GM12878 (cell line): ENCODE measurements at regions of chr6 and their contacts with region 1.

Region 1: DNA sequence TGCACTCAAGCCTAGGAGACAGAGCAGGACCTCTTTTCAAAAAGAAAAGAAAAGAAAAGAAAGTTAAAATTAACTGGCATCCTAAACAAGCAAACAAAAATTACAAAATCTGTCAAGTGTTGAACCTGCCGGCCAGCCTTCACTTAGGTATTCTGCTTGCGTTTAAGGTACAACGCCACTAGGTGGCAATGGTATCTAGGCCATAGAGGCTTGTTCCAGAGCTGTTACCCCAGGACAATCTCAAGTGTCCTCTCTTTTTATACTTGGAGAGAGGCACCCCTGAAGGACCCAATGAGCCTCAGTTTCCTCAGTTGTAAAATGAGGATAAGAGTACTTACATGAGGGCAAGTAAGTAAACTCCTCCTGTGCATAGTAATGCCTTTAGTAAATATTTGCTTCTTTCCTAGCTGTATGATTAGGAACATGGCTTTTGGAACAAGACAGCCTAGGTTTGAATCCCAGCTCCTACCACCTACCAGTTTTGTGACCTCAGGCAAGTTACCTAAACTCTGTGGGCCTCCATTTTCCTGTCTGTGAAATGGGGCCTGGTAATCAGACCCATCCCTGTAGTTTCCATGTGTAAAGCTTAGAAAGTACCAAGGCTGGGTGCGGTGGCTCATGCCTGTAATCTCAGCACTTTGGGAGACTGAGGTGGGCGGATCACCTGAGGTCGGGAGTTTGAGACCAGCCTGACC is 5.8 kb upstream of the PACSIN1 start:
- DNase-seq: peak; percentile 24
- ATAC-seq: peak; percentile 87
- H3K4me3 ChIP-seq: no peak overlapping the region
- H3K27ac ChIP-seq: no peak overlapping the region
- H3K4me1 ChIP-seq: no peaks in the 10 kb centered on the region; the same call in 1 of the 2 replicates
- H3K27me3 ChIP-seq: no peaks in the 10 kb centered on the region
- CTCF ChIP-seq: peak; percentile 69 to 83 (median 77)
- EP300 ChIP-seq: no peak
- POLR2A ChIP-seq: no peak
- RAD21 ChIP-seq: peak; percentile 95

Region 2: GRCh38 chr6:34414999-34415858 is 44.8 kb before region 1 on chr6:
- CTCF ChIA-PET with region 1: interaction called, 12 read pairs
- POLR2A ChIA-PET with region 1: no interaction called
- RAD21 ChIA-PET with region 1: interaction called, 3 read pairs
- SMC1A ChIA-PET with region 1: interaction called, 3 read pairs
- in situ Hi-C with region 1: no loop called
- intact Hi-C with region 1: no loop called
- DNase-seq: no peak
- ATAC-seq: peak; percentile 85
- H3K4me3 ChIP-seq: no peak overlapping the region
- H3K27ac ChIP-seq: no peak overlapping the region
- H3K4me1 ChIP-seq: no peaks in the 10 kb centered on the region
- H3K27me3 ChIP-seq: no peaks in the 10 kb centered on the region
- CTCF ChIP-seq: peak; percentile 44 to 73 (median 65); a peak in 5 of 6 replicates
- EP300 ChIP-seq: no peak
- POLR2A ChIP-seq: no peak
- RAD21 ChIP-seq: peak; percentile 74

Region 3: DNA sequence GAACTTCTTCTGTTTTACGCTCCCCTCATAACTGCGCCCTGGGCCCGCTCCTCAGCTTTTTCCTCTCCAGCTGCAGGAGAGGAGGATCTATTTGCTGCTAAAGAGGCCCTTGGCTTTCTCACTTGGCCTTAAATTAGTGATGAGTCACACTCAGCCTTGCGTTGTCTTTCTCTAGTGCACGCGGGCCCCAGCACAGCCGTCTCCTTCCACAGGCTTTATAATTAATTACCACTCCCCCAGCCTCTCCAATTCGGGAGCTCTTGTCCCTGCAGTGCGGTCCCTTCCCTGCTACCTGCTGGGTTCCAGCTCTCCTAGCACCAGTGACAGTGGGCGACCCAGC is 31.0 kb after region 1 on chr6:
- CTCF ChIA-PET with region 1: interaction called, 10 read pairs
- POLR2A ChIA-PET with region 1: no interaction called
- RAD21 ChIA-PET with region 1: interaction called, 4 read pairs
- SMC1A ChIA-PET with region 1: interaction called, 5 read pairs
- in situ Hi-C with region 1: no loop called
- intact Hi-C with region 1: no loop called
- DNase-seq: no peak
- ATAC-seq: no peak
- H3K4me3 ChIP-seq: no peak overlapping the region
- H3K27ac ChIP-seq: no peak overlapping the region
- H3K4me1 ChIP-seq: no peaks in the 10 kb centered on the region
- H3K27me3 ChIP-seq: no peaks in the 10 kb centered on the region
- CTCF ChIP-seq: no peak
- EP300 ChIP-seq: no peak
- POLR2A ChIP-seq: no peak
- RAD21 ChIP-seq: no peak

Region 4: GRCh38 chr6:34602318-34603111 is 142.5 kb after region 1 on chr6:
- CTCF ChIA-PET with region 1: interaction called, 198 read pairs
- POLR2A ChIA-PET with region 1: no interaction called
- RAD21 ChIA-PET with region 1: interaction called, 99 read pairs
- SMC1A ChIA-PET with region 1: interaction called, 124 read pairs
- in situ Hi-C with region 1: loop called (anchors 5 kb)
- intact Hi-C with region 1: no loop called
- DNase-seq: no peak
- ATAC-seq: no peak
- H3K4me3 ChIP-seq: no peak overlapping the region
- H3K27ac ChIP-seq: no peak overlapping the region
- H3K4me1 ChIP-seq: no peaks in the 10 kb centered on the region
- H3K27me3 ChIP-seq: no peaks in the 10 kb centered on the region
- CTCF ChIP-seq: no peak
- EP300 ChIP-seq: no peak
- POLR2A ChIP-seq: no peak
- RAD21 ChIP-seq: no peak

Region 5: DNA sequence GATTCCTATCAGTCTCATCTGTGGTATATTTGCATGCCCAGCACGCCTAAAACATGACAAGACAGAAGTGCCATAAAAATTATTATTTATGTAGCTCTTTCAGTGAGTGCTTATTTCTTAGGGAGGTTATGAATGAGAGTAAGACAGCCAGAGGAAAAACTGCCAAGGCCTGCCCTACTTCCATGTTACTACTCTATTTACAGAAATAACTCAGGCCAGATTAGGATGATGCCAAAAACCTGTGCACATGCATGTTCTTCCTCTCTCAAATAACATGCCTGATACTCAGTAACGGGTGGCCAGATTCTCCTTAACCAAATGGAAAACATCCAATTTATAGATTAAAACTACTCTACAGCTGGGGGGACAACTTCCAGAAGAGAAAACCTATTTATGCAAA is 190.8 kb after region 1 on chr6:
- CTCF ChIA-PET with region 1: no interaction called
- POLR2A ChIA-PET with region 1: no interaction called
- RAD21 ChIA-PET with region 1: no interaction called
- SMC1A ChIA-PET with region 1: no interaction called
- in situ Hi-C with region 1: no loop called
- intact Hi-C with region 1: no loop called
- DNase-seq: no peak
- ATAC-seq: no peak
- H3K4me3 ChIP-seq: no peak overlapping the region
- H3K27ac ChIP-seq: peak overlapping the region; percentile 71
- H3K4me1 ChIP-seq: peaks cover 35% of the 10 kb centered on the region
- H3K27me3 ChIP-seq: no peaks in the 10 kb centered on the region
- CTCF ChIP-seq: no peak
- EP300 ChIP-seq: no peak
- POLR2A ChIP-seq: no peak
- RAD21 ChIP-seq: no peak

Region 6: DNA sequence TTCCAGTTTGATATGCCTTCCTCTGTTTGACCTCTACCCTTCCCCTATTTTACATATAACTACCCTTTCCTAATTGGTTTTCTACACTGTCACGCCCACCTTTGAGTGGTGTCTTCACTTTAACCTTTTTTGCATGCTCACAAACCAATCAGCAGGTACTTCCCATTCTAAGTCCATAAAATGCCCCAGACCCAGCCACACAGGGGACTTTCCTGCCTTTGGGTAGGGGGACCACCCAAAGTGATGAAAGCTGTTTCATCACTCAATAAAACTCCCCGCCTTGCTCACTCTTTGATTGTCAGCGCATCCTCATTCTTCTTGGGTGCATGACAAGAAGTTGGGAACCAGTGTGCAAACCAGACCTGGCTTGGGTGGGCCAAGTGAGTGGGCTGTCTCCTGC is 276.8 kb after region 1 on chr6:
- CTCF ChIA-PET with region 1: no interaction called
- POLR2A ChIA-PET with region 1: no interaction called
- RAD21 ChIA-PET with region 1: no interaction called
- SMC1A ChIA-PET with region 1: no interaction called
- in situ Hi-C with region 1: no loop called
- intact Hi-C with region 1: no loop called
- DNase-seq: no peak
- ATAC-seq: peak; percentile 48
- H3K4me3 ChIP-seq: no peak overlapping the region
- H3K27ac ChIP-seq: no peak overlapping the region
- H3K4me1 ChIP-seq: no peaks in the 10 kb centered on the region
- H3K27me3 ChIP-seq: no peaks in the 10 kb centered on the region
- CTCF ChIP-seq: no peak
- EP300 ChIP-seq: no peak
- POLR2A ChIP-seq: no peak
- RAD21 ChIP-seq: no peak

Region 7: DNA sequence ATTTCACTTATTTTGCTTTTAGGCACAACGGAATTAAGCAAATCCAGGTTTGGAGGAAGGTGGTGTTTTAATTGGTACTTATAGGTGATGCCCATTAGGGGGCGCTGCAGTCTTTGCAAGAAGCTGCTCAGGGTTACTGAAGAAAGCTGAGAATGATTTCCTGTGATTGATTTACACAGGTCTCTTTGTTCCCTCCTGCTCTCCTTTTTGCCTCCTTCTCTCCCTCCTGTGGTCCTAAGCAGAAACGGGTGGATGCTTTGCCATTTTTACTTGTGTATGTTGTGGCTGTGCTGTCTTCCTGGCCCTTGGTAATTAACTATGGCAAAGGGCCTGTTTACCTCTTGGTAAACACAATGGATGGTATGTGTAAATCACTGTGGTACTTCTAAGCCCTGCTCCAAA is 526.8 kb after region 1 on chr6:
- CTCF ChIA-PET with region 1: interaction called, 12 read pairs
- POLR2A ChIA-PET with region 1: no interaction called
- RAD21 ChIA-PET with region 1: interaction called, 4 read pairs
- SMC1A ChIA-PET with region 1: interaction called, 3 read pairs
- in situ Hi-C with region 1: no loop called
- intact Hi-C with region 1: no loop called
- DNase-seq: no peak
- ATAC-seq: peak; percentile 79
- H3K4me3 ChIP-seq: no peak overlapping the region
- H3K27ac ChIP-seq: no peak overlapping the region
- H3K4me1 ChIP-seq: peaks cover 3% of the 10 kb centered on the region
- H3K27me3 ChIP-seq: no peaks in the 10 kb centered on the region
- CTCF ChIP-seq: peak; percentile 70 to 83 (median 79)
- EP300 ChIP-seq: no peak
- POLR2A ChIP-seq: no peak
- RAD21 ChIP-seq: peak; percentile 94